Thyroid gland (tissue), 4 donors: ENCODE measurements at regions of chr20 and their contacts with region 1.

Region 1: DNA sequence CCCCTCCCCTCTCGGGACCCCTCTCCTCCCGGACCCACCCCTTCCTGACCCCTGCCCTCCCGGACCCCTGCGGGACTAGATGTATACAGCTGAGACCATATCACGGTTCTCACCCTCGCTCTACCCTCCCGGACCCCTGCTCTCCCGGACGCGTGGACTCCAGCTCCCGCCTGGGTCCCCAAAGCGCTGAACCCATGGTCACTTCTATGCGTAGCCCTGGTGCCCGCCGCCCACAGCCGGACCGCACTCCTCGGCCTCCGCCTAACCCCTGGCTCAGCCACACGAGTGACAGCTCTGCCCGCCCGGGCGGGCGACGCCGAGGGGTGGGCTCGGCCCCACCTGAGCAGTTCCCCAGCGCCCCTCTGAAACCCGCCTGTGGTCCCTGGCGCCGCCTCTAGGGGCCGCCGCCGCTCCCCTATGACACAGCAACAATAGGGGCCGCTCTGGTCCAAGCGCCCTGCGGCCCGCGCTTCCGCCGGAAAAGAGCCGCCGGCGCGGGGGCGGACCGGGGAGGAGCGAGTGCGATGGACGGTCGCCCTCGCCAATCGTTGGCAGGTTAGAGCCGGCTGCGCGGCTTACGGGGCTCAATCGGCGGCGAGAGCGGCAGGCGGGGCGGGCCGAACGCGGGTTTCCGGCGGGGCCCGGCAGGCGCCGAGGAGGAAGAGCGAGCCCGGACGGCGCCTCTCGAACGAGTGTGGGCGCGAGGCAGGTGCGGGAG is at the start of gene ADRM1:
- DNase-seq: peak; percentile 94 to 96
- H3K4me3 ChIP-seq: peak within 1 kb of the TSS; percentile 34 to 74 (median 51)
- H3K27ac ChIP-seq: peak within 1 kb of the TSS; percentile 85 to 97 (median 96)
- H3K4me1 ChIP-seq: peaks cover 19 to 23% of the 10 kb centered on the region in 2 donors
- H3K27me3 ChIP-seq: no peaks in the 10 kb centered on the region
- CTCF ChIP-seq: peak; percentile 77 to 99 (median 93)
- POLR2A ChIP-seq: peak in 1 of 2 donors; percentile 77
- total RNA-seq, gene ADRM1: 89.9 to 140 (median 117) TPM

Region 2: DNA sequence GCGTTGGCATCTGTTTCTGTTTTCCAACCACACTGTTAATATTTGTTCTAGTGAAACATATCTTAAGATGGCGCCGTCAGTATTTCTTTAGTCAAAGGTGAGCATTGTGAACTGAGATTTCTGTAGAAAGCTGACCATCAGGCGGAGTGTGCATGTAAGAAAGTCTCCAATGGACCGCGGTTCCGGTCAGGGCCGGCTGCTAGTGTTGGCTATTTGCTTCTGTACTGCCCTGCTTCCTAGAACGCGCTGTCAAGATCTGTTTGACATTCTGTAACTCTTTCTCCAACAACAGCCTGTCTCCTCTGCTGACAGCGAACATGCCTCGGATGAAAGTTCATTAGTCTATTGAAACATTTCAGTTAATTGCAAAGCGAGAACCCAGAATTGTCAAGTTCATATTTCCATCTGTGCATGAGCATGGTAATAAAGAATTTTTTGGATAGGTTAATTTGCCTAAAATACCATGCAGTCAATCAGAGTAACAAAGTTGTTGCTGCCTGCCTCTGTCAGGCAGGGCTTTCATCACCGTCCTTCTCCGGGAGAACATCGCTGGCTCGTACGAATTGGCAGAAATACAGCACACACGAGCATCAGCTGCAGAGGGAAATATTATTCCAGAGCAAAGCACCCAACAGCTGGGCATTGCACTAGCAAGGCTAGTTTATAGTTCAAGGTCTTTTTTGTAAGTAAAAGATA is 681.3 kb before region 1 on chr20:
- intact Hi-C with region 1: no loop called
- DNase-seq: no peak
- H3K4me3 ChIP-seq: no peak overlapping the region
- H3K27ac ChIP-seq: no peak overlapping the region
- H3K4me1 ChIP-seq: no peaks in the 10 kb centered on the region
- H3K27me3 ChIP-seq: no peaks in the 10 kb centered on the region
- CTCF ChIP-seq: no peak
- POLR2A ChIP-seq: no peak

Region 3: GRCh38 chr20:62165762-62166399 is 136.6 kb before region 1 on chr20:
- intact Hi-C with region 1: no loop called
- DNase-seq: no peak
- H3K4me3 ChIP-seq: no peak overlapping the region
- H3K27ac ChIP-seq: no peak overlapping the region
- H3K4me1 ChIP-seq: no peaks in the 10 kb centered on the region
- H3K27me3 ChIP-seq: no peaks in the 10 kb centered on the region
- CTCF ChIP-seq: no peak
- POLR2A ChIP-seq: no peak

Region 4: GRCh38 chr20:62382306-62383198 is 80.1 kb after region 1 on chr20:
- intact Hi-C with region 1: loop called (anchors 5 kb)
- DNase-seq: peak; percentile 88 to 89
- H3K4me3 ChIP-seq: no peak overlapping the region
- H3K27ac ChIP-seq: no peak overlapping the region
- H3K4me1 ChIP-seq: peaks cover 30 to 47% of the 10 kb centered on the region in 2 donors
- H3K27me3 ChIP-seq: no peaks in the 10 kb centered on the region
- CTCF ChIP-seq: peak; percentile 81 to 98 (median 93)
- POLR2A ChIP-seq: no peak